Activated T-helper 1 cell treated with anti-CD3 and anti-CD28 coated beads, Interleukin-12 subunit alpha, Interleukin-12 subunit beta, Interleukin-2, Interleukin-4 antibody, amounts not matched to agents 30 ng/mL and 10 ng/mL and 1 ng/mL, durations not matched to agents 14 hours and 24 hours and 36 hours (primary cell): ENCODE measurements at regions of chr11 and their contacts with region 1.

Region 1: DNA sequence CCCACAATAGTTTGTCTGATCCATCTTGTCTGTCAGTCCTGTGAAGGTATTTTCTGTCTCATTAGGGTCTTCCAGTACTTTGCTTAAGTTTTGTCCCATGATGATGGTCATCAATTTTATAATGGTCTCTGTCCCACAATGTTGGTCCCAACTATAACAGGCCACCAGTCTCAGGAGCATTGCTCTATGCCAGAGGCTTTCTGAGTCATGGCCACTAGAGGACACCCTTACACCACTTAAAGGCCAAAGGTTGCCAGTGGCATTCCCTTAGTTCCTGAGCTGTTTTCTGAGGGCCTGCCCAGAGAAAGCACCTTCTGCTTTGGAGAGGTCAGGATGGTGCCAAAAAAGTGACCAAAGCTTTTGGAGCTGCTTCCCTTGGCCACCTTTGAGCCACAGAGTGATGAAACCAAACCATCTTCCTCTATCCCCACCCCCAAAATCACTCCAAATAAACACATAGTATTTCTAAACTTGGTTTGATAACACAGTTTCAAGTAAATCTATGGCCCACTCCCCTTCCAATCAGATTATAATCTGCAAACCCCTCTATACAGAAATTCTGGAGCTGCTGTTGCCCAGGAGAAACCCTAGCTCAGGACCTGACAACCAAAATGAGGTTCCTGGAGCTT is 19.3 kb downstream of the EIF3F start:
- DNase-seq: peak; percentile 14
- H3K4me3 Mint-ChIP-seq: no peak overlapping the region
- H3K27ac Mint-ChIP-seq: no peak overlapping the region
- H3K4me1 Mint-ChIP-seq: no peaks in the 10 kb centered on the region
- H3K27me3 Mint-ChIP-seq: no peaks in the 10 kb centered on the region

Region 2: DNA sequence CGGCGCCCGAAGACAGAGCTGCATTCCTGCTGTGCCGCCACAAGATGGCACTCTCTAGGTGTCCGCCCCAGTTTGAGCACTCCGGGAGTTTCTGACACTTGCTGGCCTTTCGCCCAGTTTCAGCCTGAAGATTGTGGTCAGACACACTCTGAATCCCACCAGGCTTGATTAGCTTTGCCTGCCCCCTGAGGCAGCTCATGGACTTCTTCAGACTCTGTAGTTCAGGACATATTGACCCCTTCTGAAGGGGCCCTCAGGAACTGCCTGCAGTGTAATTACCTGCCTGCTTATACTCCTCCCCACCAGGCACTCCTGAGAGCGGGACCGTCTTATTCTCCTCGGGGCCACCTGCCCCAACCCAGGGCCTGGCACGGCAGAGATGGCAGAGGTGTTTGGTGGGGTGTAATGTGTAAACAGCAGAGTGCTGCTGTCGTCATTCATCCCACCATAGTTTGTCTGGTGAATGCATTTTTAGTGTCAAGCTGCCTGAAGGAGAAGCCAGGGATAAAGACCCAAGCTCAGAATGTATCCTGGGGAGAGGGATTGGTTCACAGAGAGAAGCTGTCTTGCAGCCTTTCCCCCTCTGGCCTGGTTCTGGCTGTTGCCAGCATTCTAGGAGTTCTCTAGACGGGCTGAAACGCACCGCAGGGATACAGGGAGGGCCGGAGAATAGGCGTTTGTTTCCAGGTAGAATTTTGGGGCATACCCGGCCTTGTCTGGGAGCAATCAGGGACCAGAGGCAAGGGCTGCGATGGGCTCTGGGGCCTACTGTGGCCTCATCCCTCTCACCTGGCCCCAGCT is 27.0 kb after region 1 on chr11:
- intact Hi-C with region 1: loop called (anchors 2 kb)
- DNase-seq: peak; percentile 28
- H3K4me3 Mint-ChIP-seq: no peak overlapping the region
- H3K27ac Mint-ChIP-seq: no peak overlapping the region
- H3K4me1 Mint-ChIP-seq: no peaks in the 10 kb centered on the region
- H3K27me3 Mint-ChIP-seq: peaks cover 22% of the 10 kb centered on the region

Region 3: GRCh38 chr11:8092587-8093424 is 86.3 kb after region 1 on chr11:
- intact Hi-C with region 1: loop called (anchors 1 kb)
- DNase-seq: no peak
- H3K4me3 Mint-ChIP-seq: no peak overlapping the region
- H3K27ac Mint-ChIP-seq: no peak overlapping the region
- H3K4me1 Mint-ChIP-seq: no peaks in the 10 kb centered on the region
- H3K27me3 Mint-ChIP-seq: no peaks in the 10 kb centered on the region

Region 4: DNA sequence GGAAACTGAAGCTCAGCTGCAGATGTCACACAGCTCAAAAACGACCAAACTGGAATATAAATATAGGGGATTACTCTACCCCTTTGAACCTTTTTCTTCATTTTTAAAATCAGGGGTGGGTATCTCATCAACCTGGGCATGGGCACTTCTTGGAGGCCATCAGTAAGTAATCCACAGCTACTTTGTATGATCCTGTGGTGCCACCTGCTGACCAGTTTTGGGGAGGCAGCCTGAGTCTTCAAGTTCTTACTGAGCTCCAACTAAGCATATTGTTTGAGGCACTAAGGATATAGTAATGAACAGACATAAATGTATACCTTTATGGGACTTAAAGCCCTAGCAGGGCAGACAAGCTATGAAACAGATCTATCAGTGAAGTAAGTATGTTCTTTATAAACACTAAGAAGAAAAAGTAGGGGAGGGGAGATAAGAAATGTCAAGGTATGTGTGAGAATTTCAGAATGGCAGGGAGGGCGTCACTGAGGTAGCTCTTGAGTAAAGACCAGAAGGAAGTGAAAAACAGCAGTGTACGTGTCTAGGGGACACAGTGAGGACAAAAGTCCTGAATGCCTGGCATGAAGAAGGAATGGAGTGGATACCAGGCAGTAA is 92.9 kb after region 1 on chr11:
- intact Hi-C with region 1: loop called (anchors 1 kb)
- DNase-seq: peak; percentile 43
- H3K4me3 Mint-ChIP-seq: no peak overlapping the region
- H3K27ac Mint-ChIP-seq: no peak overlapping the region
- H3K4me1 Mint-ChIP-seq: no peaks in the 10 kb centered on the region
- H3K27me3 Mint-ChIP-seq: no peaks in the 10 kb centered on the region